PC-9 (cell line): ENCODE measurements at regions of chr15 and their contacts with region 1.

Region 1: GRCh38 chr15:40893733-40894688 is at the start of gene VPS18:
- DNase-seq: peak; percentile 84 to 97
- H3K4me3 ChIP-seq: peak within 1 kb of the TSS; percentile 94
- H3K27ac ChIP-seq: peak within 1 kb of the TSS; percentile 73
- H3K4me1 ChIP-seq: peaks cover 20% of the 10 kb centered on the region
- H3K27me3 ChIP-seq: no peaks in the 10 kb centered on the region
- CTCF ChIP-seq: peak; percentile 80
- total RNA-seq, gene VPS18: 9.6 and 9.9 TPM in 2 replicates

Region 2: DNA sequence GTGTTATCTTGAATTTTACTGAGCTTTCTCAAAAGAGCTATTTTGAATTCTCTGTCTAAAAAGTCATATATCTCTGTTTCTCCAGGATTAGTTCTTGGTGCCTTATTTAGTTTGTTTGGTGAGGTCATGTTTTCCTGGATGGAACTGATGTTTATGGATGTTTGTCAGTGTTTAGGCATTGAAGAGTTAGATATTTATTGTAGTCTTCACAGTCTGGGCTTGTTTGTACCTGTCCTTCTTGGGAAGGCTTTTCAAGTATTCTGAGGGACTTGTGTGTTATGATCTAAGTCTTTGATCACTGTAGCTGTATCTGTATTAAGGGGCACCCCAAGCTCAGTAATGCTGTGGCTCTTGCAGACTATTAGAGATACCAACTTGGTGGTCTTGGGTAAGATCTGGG is 209.6 kb before region 1 on chr15:
- CTCF ChIA-PET with region 1: interaction called, 4 read pairs
- POLR2A ChIA-PET with region 1: no interaction called
- intact Hi-C with region 1: loop called (anchors 2 kb)
- DNase-seq: no peak
- H3K4me3 ChIP-seq: no peak overlapping the region
- H3K27ac ChIP-seq: no peak overlapping the region
- H3K4me1 ChIP-seq: peaks cover 9% of the 10 kb centered on the region
- H3K27me3 ChIP-seq: no peaks in the 10 kb centered on the region
- CTCF ChIP-seq: no peak

Region 3: DNA sequence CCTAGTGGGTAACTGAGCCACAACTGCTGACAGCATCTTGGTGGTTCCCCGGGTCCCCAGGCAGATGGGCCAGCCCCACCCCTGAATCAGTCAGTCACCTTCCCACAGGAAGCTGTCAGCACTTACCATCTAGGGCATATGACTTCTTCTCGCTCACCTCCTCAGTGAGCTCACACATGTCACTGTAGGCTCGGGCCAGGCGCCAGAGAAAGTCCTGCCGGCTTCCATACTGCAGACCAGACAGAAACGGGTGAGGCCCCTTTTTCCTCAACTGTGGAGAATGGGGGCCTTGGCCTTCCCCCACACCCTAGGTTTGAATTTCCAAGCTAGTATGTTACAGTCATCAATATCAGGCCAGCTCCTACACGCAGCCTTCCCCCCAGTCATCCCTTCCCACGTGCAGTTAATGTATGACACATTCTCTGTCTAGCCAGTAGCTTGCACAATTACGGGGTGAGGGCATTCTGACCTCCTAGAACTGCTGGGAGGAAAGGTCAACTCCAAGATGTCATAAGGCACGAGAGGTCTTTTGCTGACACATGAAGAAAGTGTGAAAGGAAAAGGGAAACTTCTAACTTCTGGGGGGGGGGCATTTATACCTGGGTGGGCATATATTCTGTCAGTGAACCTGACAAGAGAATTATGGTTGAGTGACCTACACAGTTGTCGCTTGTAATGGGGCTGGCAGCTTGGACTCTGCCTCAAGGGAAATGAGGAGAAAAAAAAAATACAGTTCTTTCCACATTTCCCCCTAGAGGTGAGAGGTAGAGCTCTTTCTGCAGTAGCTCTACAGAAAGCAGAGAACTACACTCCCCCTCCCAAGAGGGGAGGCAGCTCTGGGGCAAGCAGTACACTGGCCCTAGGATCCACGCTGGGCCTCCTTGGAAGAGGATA is 149.8 kb before region 1 on chr15:
- CTCF ChIA-PET with region 1: interaction called, 3 read pairs
- POLR2A ChIA-PET with region 1: no interaction called
- intact Hi-C with region 1: loop called (anchors 1 kb)
- DNase-seq: no peak
- H3K4me3 ChIP-seq: no peak overlapping the region
- H3K27ac ChIP-seq: no peak overlapping the region
- H3K4me1 ChIP-seq: no peaks in the 10 kb centered on the region
- H3K27me3 ChIP-seq: no peaks in the 10 kb centered on the region
- CTCF ChIP-seq: no peak

Region 4: GRCh38 chr15:40776522-40777137 is 117.4 kb before region 1 on chr15:
- CTCF ChIA-PET with region 1: no interaction called
- POLR2A ChIA-PET with region 1: interaction called, 12 read pairs
- intact Hi-C with region 1: no loop called
- DNase-seq: peak; percentile 89
- H3K4me3 ChIP-seq: no peak overlapping the region
- H3K27ac ChIP-seq: peak overlapping the region; percentile 79
- H3K4me1 ChIP-seq: peaks cover 21% of the 10 kb centered on the region
- H3K27me3 ChIP-seq: no peaks in the 10 kb centered on the region
- CTCF ChIP-seq: no peak

Region 5: DNA sequence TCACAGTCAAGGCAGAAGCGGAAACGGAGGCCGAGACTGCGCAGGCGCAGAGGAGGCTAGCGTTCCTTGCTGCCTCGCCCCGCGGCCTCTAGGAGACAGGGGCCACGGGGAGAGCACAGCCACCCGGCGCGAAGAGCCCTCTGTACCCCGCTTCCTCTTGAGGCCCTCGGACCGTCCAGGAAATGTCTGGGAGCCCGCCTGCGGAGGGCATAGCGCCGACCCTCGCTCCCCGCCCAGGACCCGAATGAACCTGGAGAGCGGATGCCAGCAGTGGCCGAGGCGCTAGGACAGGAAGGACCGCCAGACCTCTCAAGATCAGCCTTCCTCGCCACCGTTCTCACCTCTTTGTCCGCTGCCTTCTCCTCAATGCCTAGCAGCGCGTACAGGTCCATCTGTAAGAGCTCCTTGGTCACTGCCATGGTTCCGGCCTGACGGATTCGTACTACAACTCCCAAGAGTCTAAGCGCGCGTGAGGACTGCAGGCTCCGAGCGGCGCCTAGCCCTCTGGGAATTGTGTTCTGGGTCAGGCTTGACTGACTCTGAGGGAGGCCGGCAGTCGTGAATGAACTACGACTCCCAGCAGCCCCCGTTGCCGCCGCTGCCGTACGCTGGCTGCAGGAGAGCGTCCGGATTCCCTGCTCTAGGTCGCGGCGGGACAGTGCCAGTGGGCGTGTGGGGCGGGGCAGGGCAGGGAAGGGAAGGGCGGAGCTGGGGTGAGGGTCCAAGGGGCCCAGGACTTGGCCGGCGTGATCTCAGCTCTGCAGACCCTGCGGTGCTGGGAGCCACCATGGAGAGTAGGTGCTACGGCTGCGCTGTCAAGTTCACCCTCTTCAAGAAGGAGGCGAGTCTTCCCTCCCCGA is 86.8 kb before region 1 on chr15 and contains the starts of genes DNAJC17 and ZFYVE19:
- CTCF ChIA-PET with region 1: interaction called, 13 read pairs
- POLR2A ChIA-PET with region 1: no interaction called
- intact Hi-C with region 1: no loop called
- DNase-seq: peak; percentile 91 to 93
- H3K4me3 ChIP-seq: peak within 1 kb of the TSS; percentile 99
- H3K27ac ChIP-seq: peak within 1 kb of the TSS; percentile 72
- H3K4me1 ChIP-seq: peaks cover 9% of the 10 kb centered on the region; the same call in 1 of the 2 replicates
- H3K27me3 ChIP-seq: no peaks in the 10 kb centered on the region
- CTCF ChIP-seq: no peak
- total RNA-seq, gene DNAJC17: 27.4 and 33.0 TPM in 2 replicates
- total RNA-seq, gene ZFYVE19: 32.6 and 33.1 TPM in 2 replicates

Region 6: GRCh38 chr15:40830884-40831283 is 63.1 kb before region 1 on chr15:
- CTCF ChIA-PET with region 1: interaction called, 10 read pairs
- POLR2A ChIA-PET with region 1: no interaction called
- intact Hi-C with region 1: no loop called
- DNase-seq: no peak
- H3K4me3 ChIP-seq: no peak overlapping the region
- H3K27ac ChIP-seq: no peak overlapping the region
- H3K4me1 ChIP-seq: peaks cover 38% of the 10 kb centered on the region
- H3K27me3 ChIP-seq: no peaks in the 10 kb centered on the region
- CTCF ChIP-seq: no peak

Region 7: GRCh38 chr15:40873625-40874561 is 20.1 kb before region 1 on chr15 and contains the start of gene RHOV:
- CTCF ChIA-PET with region 1: interaction called, 19 read pairs
- POLR2A ChIA-PET with region 1: interaction called, 4 read pairs
- intact Hi-C with region 1: no loop called
- DNase-seq: peak; percentile 70 to 78
- H3K4me3 ChIP-seq: peak within 1 kb of the TSS; percentile 81
- H3K27ac ChIP-seq: peak within 1 kb of the TSS; percentile 91
- H3K4me1 ChIP-seq: peaks cover 52% of the 10 kb centered on the region
- H3K27me3 ChIP-seq: no peaks in the 10 kb centered on the region
- CTCF ChIP-seq: peak; percentile 42; the same call in 1 of the 2 replicates
- total RNA-seq, gene RHOV: 1.4 and 4.1 TPM in 2 replicates